H1 (cell line): ENCODE measurements at regions of chr3 and their contacts with region 1.

Region 1: GRCh38 chr3:161700998-161701397 is 204.4 kb downstream of the OTOL1 start:
- DNase-seq: peak; percentile 10 to 46
- H3K4me3 ChIP-seq: no peak overlapping the region
- H3K27ac ChIP-seq: no peak overlapping the region
- H3K4me1 ChIP-seq: peaks cover 0 to 3% (median 0%) of the 10 kb centered on the region in 4 experiments; a peak in 1 of 7 replicates
- H3K27me3 ChIP-seq: no peaks in the 10 kb centered on the region
- CTCF ChIP-seq: peak in 2 of 3 experiments; percentile 61 to 74; a peak in 3 of 4 replicates
- EP300 ChIP-seq: no peak
- POLR2A ChIP-seq: no peak
- RAD21 ChIP-seq: peak; percentile 90 to 91

Region 2: GRCh38 chr3:161559177-161559998 is 141.6 kb before region 1 on chr3:
- CTCF ChIA-PET with region 1: interaction called, 37 read pairs
- POLR2A ChIA-PET with region 1: no interaction called
- DNase-seq: peak in 1 of 2 experiments; percentile 7
- H3K4me3 ChIP-seq: no peak overlapping the region
- H3K27ac ChIP-seq: no peak overlapping the region
- H3K4me1 ChIP-seq: peaks cover 0 to 4% (median 0%) of the 10 kb centered on the region in 4 experiments; a peak in 1 of 7 replicates
- H3K27me3 ChIP-seq: no peaks in the 10 kb centered on the region
- CTCF ChIP-seq: peak in 2 of 3 experiments; percentile 71 to 78; a peak in 3 of 4 replicates
- EP300 ChIP-seq: no peak
- POLR2A ChIP-seq: no peak
- RAD21 ChIP-seq: peak; percentile 90 to 93